Sigmoid colon (tissue), 7 donors: ENCODE measurements at regions of chr1 and their contacts with region 1.

Region 1: GRCh38 chr1:220527908-220528678 is at the start of gene MARK1:
- DNase-seq: peak; percentile 87
- H3K4me3 ChIP-seq: peak within 1 kb of the TSS; percentile 73 to 94 (median 84)
- H3K27ac ChIP-seq: peak within 1 kb of the TSS; percentile 77 to 87 (median 84)
- H3K4me1 ChIP-seq: peaks cover 0 to 20% (median 7%) of the 10 kb centered on the region in 4 donors
- H3K27me3 ChIP-seq: no peaks in the 10 kb centered on the region
- CTCF ChIP-seq: no peak
- EP300 ChIP-seq: no peak
- POLR2A ChIP-seq: no peak
- total RNA-seq, gene MARK1: 9.3 to 15.0 (median 10.9) TPM

Region 2: DNA sequence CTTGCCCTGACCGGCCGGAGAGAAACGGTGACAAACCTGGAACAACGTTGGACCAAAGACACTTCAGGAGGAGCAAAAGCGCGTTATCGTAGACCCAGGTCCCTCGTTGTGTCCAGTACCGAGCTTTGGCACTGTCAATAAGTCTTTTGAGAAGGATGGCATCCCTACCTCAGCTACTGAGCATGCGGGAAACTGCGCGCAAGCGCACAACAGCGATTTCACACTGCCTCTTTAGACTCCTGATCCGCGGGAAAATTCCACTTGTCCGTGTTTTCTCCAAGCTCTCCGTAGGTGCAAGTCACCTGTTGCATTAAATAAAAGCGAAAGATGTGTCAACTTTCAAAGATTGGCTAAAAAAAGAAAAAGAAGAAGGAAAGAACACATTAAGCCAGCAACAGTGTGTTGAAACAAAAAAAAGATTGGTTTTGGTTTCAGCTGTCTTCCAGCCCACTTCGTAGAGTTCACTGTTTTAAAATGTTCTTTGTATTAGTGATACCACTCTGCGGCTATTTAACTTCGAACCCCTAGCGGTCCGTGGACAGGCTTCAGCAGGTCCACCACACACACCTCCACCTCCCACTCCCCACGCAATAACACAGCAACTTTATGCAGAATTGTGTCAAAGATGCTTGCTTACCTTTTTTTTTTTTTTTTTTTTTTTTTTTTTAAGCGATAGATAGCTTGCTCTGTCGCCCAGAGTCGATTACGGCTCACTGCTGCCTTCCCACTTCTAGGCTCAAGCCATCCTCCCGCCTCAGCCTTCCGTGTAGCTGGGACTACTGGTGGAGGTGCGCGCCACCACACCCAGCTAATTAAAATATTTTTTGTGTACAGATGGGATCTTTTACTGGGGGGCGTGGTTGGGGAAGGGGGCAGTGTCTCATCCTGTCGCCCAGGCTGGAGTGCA is 438.2 kb before region 1 on chr1 and contains the start of gene BPNT1:
- intact Hi-C with region 1: loop called (anchors 5 kb)
- DNase-seq: peak; percentile 96
- H3K4me3 ChIP-seq: peak within 1 kb of the TSS; percentile 42 to 66 (median 56)
- H3K27ac ChIP-seq: peak within 1 kb of the TSS; percentile 55 to 71 (median 62)
- H3K4me1 ChIP-seq: peaks cover 4 to 18% (median 8%) of the 10 kb centered on the region in 4 donors
- H3K27me3 ChIP-seq: no peaks in the 10 kb centered on the region
- CTCF ChIP-seq: no peak
- EP300 ChIP-seq: no peak
- POLR2A ChIP-seq: peak in 1 of 2 donors; percentile 40
- total RNA-seq, gene BPNT1: 13.3 to 19.7 (median 16.8) TPM

Region 3: DNA sequence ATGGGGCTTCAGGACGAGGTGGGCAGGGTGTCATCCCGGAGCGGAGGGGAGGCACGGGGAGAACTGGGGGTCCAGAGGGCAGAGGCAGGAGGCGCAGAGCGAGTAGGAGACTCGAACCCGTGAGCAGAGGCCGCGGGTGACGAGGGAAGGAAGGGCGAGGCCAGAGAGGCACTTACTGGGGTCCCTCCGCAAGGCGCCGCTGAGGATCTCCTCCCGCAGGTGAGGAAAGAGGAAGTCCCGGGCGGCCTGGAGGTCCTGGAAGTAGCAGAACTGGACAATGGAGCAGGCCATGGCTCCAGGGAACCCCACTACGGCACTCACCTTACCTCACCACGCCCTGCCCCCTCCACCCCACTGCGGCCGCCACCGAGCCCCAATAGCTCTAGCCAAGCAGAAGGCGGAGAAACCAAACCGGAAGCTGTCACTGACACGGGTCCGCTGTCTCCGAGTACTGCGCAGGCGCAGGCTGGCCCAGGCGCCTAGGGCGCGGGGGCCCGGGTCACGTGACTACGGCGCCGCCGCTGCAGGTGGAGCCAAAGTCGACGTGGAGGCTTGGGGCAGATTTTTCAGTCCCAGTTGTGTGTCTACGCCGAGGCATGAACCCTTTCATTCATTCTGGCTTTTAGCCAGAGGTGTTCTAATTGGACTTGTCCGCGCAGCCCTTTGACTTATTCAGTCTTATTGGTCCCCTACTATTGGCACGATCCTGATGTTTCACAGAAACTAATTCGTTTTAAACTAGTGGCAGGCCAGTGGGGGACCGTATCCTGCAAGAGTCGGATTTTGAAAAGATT is 255.8 kb before region 1 on chr1 and contains the start of gene RAB3GAP2:
- intact Hi-C with region 1: loop called (anchors 5 kb)
- DNase-seq: peak; percentile 98
- H3K4me3 ChIP-seq: peak within 1 kb of the TSS; percentile 60 to 97 (median 90)
- H3K27ac ChIP-seq: peak within 1 kb of the TSS; percentile 77 to 90 (median 88)
- H3K4me1 ChIP-seq: peaks cover 0 to 35% (median 29%) of the 10 kb centered on the region in 4 donors
- H3K27me3 ChIP-seq: no peaks in the 10 kb centered on the region
- CTCF ChIP-seq: no peak
- EP300 ChIP-seq: peak in 1 of 4 donors; percentile 74
- POLR2A ChIP-seq: peak; percentile 41 to 45
- total RNA-seq, gene RAB3GAP2: 22.7 to 31.6 (median 25.6) TPM

Region 4: GRCh38 chr1:220315070-220315839 is 212.8 kb before region 1 on chr1:
- intact Hi-C with region 1: no loop called
- DNase-seq: no peak
- H3K4me3 ChIP-seq: no peak overlapping the region
- H3K27ac ChIP-seq: no peak overlapping the region
- H3K4me1 ChIP-seq: no peaks in the 10 kb centered on the region
- H3K27me3 ChIP-seq: no peaks in the 10 kb centered on the region
- CTCF ChIP-seq: no peak
- EP300 ChIP-seq: no peak
- POLR2A ChIP-seq: no peak

Region 5: GRCh38 chr1:220432425-220432824 is 95.7 kb before region 1 on chr1:
- intact Hi-C with region 1: no loop called
- DNase-seq: no peak
- H3K4me3 ChIP-seq: no peak overlapping the region
- H3K27ac ChIP-seq: no peak overlapping the region
- H3K4me1 ChIP-seq: no peaks in the 10 kb centered on the region
- H3K27me3 ChIP-seq: no peaks in the 10 kb centered on the region
- CTCF ChIP-seq: no peak
- EP300 ChIP-seq: no peak
- POLR2A ChIP-seq: no peak

Region 6: DNA sequence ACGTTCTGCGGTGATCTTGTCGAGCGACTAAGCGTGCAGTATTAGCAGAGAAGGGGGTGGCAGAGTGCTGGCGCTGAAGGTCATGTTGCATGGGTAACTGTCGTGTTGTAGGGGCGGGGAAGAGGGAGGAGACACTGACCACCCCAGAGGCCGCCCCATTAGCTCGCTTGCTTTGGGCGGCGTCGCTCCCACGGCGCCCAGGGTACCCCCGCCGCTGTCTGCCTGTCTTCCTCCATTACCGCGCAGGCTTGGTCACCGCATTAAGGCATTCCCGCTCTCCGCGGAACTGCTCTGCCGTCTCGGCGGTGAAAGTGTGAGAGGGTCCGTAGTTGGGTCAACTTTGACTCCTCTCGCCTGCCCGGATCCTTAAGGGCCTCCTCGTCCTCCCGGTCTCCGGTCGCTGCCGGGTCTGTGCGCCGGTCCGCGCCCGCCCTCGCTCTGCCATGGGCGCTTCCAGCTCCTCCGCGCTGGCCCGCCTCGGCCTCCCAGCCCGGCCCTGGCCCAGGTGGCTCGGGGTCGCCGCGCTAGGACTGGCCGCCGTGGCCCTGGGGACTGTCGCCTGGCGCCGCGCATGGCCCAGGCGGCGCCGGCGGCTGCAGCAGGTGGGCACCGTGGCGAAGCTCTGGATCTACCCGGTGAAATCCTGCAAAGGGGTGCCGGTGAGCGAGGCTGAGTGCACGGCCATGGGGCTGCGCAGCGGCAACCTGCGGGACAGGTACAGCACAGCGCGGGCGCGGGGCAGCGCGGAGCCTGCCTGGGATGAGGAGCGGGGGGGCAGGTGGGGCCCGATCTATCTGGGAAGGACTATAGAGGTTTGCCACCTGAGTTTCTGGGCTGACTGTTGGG is 220.2 kb after region 1 on chr1 and contains the start of gene MTARC2:
- intact Hi-C with region 1: loop called (anchors 10 kb)
- DNase-seq: peak; percentile 92
- H3K4me3 ChIP-seq: peak within 1 kb of the TSS; percentile 58 to 97 (median 82)
- H3K27ac ChIP-seq: peak within 1 kb of the TSS; percentile 78 to 92 (median 86)
- H3K4me1 ChIP-seq: peaks cover 0 to 40% (median 34%) of the 10 kb centered on the region in 4 donors
- H3K27me3 ChIP-seq: no peaks in the 10 kb centered on the region
- CTCF ChIP-seq: no peak
- EP300 ChIP-seq: no peak
- POLR2A ChIP-seq: peak; percentile 70 to 82
- total RNA-seq, gene MTARC2: 11.4 to 22.7 (median 18.8) TPM